ENCODE measurements at regions of chr11 and their contacts with region 1.

Region 1: GRCh38 chr11:59171508-59172322 is at the start of gene DTX4:
- DNase-seq: peak; percentile 95
- ATAC-seq: peak; percentile 92
- total RNA-seq, gene DTX4: 3.6 to 5.0 TPM

Region 2: GRCh38 chr11:59207988-59208451 is 36.3 kb after region 1 on chr11:
- intact Hi-C with region 1: loop called (anchors 1 to 5 kb)
- DNase-seq: peak; percentile 45
- ATAC-seq: peak; percentile 49 to 68

Region 3: DNA sequence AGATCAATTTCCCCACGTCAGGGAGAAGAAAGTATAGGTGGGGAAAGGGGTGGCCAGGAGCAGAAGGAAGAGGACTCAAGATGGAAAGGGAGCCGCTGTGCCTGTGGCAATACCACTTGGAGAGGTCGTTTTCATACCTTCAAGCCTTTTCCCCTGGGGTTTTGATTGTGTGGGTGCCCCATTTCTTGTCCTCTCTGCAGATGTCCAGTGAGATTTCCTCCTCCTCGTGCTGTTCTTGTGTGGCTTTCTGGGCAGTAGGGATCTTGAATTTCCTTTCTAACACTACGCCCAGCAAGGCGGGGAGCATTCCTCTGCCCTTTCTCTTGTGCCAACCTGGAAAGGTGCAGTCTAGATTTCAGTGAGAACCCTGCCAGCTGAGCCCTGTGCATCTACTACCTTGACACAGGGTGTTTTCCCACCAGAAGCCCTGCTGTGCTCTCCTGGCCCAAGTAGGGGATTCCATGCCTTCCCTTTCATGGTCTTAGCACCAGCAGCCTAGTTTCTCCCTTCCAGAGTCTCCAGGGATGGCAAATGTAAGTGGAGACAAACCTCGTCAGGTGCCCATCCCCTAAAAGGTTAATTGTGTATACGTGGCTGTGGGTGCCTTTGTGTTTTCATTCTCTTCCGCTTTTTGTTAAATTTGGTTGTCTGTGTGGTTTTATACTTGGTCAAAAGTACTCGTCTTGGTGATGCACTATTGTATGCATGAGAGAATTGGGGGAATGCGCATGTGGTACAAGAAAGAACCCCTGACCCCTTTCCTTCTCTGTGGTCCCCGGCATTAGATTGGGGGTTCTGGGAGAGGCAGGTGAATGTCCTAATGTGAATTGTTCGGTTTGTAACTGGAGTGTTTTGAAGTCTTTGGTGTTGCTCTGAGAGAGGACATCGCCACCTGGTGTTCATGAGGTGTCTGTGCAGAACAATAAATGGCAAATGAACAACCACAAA is 112.4 kb after region 1 on chr11:
- intact Hi-C with region 1: loop called (anchors 2 to 5 kb)
- DNase-seq: peak; percentile 42
- ATAC-seq: peak; percentile 44 to 71

Region 4: DNA sequence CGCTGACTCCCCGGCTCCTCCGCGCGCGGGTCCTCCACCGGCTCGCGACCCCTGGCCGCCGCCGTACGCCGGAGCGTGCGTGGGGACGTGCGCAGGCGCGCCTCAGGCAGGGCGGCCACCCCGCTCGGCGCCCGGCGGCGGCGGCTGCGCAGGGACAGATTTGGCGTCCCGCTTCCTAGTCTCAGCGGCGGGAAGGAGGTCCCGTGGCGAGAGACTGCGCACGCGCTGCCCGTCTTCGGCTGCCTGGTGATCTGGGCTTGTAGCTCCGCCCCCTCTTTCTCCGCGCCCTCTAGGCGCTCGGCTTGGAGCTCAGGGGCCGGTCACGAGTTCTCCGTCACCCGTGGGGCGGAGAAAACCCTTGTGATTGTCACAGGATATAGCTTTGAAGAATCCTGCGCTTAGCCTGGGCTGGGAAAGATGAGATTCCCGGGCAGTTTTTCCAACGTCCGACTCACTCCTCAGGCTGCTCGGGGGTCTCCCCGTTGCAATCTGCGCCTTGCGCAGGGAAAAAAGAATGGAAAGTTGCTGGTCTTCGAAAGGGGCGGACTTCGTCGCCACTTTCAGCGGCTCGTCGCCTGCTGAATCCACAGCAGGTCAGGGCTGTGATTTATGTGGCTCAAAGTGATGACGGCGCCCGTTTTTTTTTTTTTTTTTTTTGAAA is 497.4 kb after region 1 on chr11 and contains the start of gene PATL1:
- intact Hi-C with region 1: loop called in 1 of 2 experiments (anchors 10 kb)
- DNase-seq: peak; percentile 100
- ATAC-seq: peak; percentile 97
- total RNA-seq, gene PATL1: 21.6 to 28.2 TPM

Measured in left cardiac atrium (tissue), 4 donors.